Activated T-helper 1 cell treated with anti-CD3 and anti-CD28 coated beads, Interleukin-12 subunit alpha, Interleukin-12 subunit beta, Interleukin-2, Interleukin-4 antibody, amounts not matched to agents 30 ng/mL and 10 ng/mL and 1 ng/mL, durations not matched to agents 14 hours and 24 hours and 36 hours (primary cell): ENCODE measurements at regions of chr17 and their contacts with region 1.

Region 1: GRCh38 chr17:41107941-41108450 is 2.8 kb downstream of the KRTAP4-9 start:
- DNase-seq: no peak
- H3K4me3 Mint-ChIP-seq: no peak overlapping the region
- H3K27ac Mint-ChIP-seq: no peak overlapping the region
- H3K4me1 Mint-ChIP-seq: no peaks in the 10 kb centered on the region
- H3K27me3 Mint-ChIP-seq: peaks cover 5% of the 10 kb centered on the region

Region 2: GRCh38 chr17:41082626-41083025 is 25.4 kb before region 1 on chr17:
- intact Hi-C with region 1: loop called (anchors 1 kb)
- DNase-seq: no peak
- H3K4me3 Mint-ChIP-seq: no peak overlapping the region
- H3K27ac Mint-ChIP-seq: no peak overlapping the region
- H3K4me1 Mint-ChIP-seq: no peaks in the 10 kb centered on the region
- H3K27me3 Mint-ChIP-seq: no peaks in the 10 kb centered on the region

Region 3: DNA sequence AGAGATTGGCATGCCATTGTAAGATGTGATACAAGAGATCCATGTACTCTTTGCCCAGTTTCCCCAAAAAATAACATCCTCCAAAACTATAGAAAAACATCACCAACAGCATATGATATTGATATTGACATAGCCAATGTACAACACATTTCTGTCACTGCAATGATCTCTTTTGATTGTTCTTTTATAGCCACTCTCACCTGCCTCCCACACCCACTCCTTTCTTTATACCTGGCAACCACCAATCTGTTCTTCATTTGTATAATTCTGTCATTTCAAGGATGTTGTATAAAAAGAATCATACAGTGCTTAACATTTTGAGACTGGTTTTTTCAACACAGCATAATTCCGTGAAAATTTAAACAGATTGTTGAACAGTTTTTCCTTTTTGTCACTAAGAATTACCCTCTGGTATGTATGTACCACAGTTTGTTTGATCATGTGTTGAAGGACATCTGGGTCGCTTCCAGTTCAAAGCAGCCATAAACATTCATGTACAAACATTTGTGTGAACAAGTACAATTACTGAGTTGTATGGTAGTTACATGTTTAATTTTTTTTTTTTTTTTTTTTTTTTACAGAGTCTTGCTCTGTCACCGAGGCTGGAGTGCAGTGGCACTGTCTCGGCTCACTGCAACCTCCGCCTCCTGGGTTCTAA is 91.6 kb after region 1 on chr17:
- intact Hi-C with region 1: no loop called
- DNase-seq: no peak
- H3K4me3 Mint-ChIP-seq: no peak overlapping the region
- H3K27ac Mint-ChIP-seq: no peak overlapping the region
- H3K4me1 Mint-ChIP-seq: no peaks in the 10 kb centered on the region
- H3K27me3 Mint-ChIP-seq: peaks cover 2% of the 10 kb centered on the region